Natural killer cell (primary cell): ENCODE measurements at regions of chr19 and their contacts with region 1.

Region 1: DNA sequence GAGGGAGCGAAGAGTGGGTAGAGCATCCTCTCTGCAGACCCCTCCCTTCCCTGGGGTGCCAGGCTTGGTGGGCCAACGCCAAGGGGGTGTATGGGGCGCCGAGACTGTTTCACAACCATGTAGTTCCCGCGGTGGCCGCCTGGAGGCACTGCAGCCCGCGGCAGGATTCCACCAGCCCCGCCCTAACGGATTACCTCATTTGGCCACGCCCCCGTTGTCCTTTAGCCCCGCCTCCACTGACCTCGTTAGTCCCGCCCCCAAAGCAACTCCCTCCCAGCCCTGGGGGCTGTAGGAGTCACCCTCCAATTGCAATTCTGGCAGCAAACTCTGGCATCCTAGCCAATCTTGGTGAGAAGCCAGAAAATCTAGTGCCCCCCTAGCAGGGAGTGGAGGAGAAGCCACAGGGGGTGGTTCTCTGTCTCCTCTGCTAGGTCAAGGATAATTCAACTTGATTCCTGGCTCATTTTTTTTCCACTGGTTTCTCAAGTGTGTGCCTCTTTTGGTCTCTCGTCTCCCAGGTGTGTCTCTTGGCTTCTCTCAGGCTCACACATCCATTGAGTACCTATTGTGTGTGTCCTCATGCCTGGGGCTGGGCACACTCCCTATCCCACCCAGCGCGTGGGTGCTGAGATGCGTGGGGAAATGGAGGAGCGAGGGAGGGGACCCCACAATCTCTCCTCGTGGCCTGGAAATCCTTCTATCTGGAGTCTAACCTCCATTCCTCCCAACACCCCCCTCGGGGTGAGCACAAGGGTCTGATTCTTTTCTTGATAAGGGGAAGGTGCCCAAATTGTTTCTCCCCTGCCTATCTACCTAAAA is 2.0 kb downstream of the OLFM2 start:
- DNase-seq: peak; percentile 84 to 90
- ATAC-seq: peak; percentile 92 to 95 (median 92)
- H3K4me3 ChIP-seq: no peak overlapping the region
- H3K4me3 Mint-ChIP-seq: no peak overlapping the region
- H3K27ac ChIP-seq: no peak overlapping the region
- H3K27ac Mint-ChIP-seq: peak overlapping the region in 1 of 2 donors; percentile 40
- H3K4me1 ChIP-seq: peaks cover 24% of the 10 kb centered on the region
- H3K4me1 Mint-ChIP-seq: peaks cover 22 to 33% of the 10 kb centered on the region in 2 donors
- H3K27me3 ChIP-seq: peaks cover 30% of the 10 kb centered on the region
- H3K27me3 Mint-ChIP-seq: peaks cover 37 to 48% of the 10 kb centered on the region in 2 donors
- CTCF ChIP-seq: peak; percentile 91

Region 2: DNA sequence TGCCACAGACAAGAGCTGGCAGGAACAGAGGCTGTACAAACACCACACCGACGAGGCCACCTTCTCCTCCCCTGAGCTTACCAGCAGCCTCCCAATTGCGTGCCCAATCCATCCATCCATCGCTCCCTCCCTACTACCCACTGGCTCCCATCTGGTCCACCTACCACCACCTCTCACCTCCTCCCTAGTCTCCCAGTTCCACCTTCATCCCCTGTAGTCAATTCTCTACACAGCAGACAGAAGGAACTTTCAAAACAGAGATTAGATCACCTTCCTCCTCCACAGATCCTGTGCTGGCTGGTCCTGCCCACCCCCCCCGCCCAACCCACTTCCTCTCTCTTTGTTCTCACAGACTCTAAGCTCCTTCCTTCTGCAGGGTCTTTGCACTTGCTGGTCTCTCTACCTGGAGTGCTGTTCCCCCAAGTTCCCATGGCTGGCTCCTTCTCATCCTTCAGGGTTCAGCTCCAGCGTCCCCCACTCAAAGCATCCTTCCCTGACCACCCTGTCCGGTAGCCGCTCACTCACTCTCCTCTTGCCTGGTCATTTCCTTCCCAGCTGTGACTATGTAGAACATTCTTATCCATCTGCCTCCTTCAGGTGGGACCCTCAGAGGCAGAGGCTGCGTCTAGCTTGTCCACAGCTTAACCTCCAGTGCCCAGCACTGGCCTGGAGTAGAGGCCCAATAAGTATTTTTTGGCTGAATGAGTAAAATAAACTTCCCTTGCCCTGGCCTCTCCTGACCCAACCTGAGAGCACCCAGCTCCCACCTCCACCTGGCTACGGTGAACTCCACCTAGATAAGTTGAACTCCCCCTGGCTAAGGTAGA is 76.2 kb before region 1 on chr19:
- intact Hi-C with region 1: no loop called
- DNase-seq: peak in 1 of 2 donors; percentile 76
- ATAC-seq: peak; percentile 43 to 73 (median 55)
- H3K4me3 ChIP-seq: no peak overlapping the region
- H3K4me3 Mint-ChIP-seq: peak overlapping the region; percentile 88
- H3K27ac ChIP-seq: peak overlapping the region; percentile 71
- H3K27ac Mint-ChIP-seq: peak overlapping the region; percentile 90 to 92
- H3K4me1 ChIP-seq: peaks cover 35% of the 10 kb centered on the region
- H3K4me1 Mint-ChIP-seq: peaks cover 34 to 52% of the 10 kb centered on the region in 2 donors
- H3K27me3 ChIP-seq: no peaks in the 10 kb centered on the region
- H3K27me3 Mint-ChIP-seq: no peaks in the 10 kb centered on the region
- CTCF ChIP-seq: no peak

Region 3: DNA sequence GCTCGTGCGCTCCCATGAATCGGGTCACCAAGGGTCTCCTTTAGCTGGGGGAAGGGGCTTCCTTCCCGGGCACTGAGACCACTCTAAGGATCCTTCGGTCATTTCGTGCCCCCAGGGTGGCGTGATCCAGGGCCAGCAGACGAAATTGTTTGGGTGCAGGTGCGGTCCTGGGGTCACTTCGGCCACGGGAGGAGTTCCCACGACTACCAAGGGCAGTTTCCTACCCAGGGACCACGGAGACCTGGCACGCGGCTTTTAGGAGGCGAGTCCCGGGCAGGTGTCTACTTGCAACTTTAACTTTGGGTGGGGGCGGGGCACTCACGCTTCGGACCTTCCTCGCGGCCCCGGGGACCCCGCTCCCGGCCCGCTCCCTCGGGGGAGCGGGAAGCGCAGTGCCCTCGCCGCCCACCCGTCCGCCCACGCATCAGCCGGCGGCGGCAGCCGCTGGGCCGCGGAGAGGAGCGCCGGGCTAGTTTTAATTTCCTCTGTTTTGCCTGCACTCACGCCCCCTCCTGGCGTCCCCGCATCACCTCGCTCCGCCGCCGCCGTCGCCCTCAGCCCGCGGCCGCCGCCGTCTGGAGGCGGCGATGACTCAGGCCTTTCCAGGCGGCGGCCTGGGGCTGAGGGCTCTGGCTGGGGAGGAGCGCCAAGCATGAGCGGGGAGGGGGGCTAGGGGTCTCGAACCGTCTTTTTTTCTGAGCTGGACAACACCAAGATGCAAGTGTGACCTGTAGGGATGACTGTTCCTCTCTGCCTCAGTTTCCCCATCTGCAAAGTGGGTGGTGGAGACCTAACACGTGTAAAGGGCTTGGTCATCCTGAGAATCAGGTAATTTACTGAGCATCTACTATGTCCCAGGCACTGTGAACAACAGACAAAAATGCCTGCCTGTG is 19.8 kb before region 1 on chr19:
- intact Hi-C with region 1: no loop called
- DNase-seq: peak; percentile 76 to 89
- ATAC-seq: peak; percentile 86 to 93 (median 92)
- H3K4me3 ChIP-seq: peak overlapping the region; percentile 19
- H3K4me3 Mint-ChIP-seq: peak overlapping the region; percentile 47
- H3K27ac ChIP-seq: no peak overlapping the region
- H3K27ac Mint-ChIP-seq: no peak overlapping the region
- H3K4me1 ChIP-seq: peaks cover 17% of the 10 kb centered on the region
- H3K4me1 Mint-ChIP-seq: peaks cover 0 to 5% of the 10 kb centered on the region in 2 donors
- H3K27me3 ChIP-seq: peaks cover 21% of the 10 kb centered on the region
- H3K27me3 Mint-ChIP-seq: peaks cover 25 to 27% of the 10 kb centered on the region in 2 donors
- CTCF ChIP-seq: peak; percentile 45

Region 4: DNA sequence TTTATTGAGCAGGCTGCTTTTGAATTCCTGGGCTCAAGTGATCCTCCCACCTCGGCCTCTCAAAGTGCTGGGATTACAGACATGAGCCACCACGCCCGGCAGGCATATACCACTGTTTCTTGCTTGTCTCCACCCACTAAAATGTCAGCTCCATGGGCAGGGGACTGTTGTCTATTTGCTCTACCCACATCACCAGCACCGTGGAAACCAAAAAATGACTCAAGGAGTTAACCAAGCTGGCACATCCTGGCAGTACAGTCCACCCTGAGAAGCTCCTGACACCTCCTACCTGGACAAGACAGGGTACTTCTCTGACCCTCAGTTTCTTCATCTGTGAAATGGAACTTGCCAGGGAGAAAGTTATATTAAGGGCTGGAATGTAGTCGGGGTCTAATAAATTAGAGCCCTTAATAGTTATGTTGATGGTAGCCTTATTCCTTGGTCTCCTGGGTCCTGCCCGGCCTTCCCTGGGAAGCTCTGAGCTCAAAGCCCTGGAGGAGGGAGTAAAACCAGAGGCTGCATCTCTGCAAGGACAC is 92.9 kb after region 1 on chr19:
- intact Hi-C with region 1: loop called (anchors 1 kb)
- DNase-seq: no peak
- ATAC-seq: no peak
- H3K4me3 ChIP-seq: no peak overlapping the region
- H3K4me3 Mint-ChIP-seq: no peak overlapping the region
- H3K27ac ChIP-seq: no peak overlapping the region
- H3K27ac Mint-ChIP-seq: no peak overlapping the region
- H3K4me1 ChIP-seq: peaks cover 6% of the 10 kb centered on the region
- H3K4me1 Mint-ChIP-seq: no peaks in the 10 kb centered on the region
- H3K27me3 ChIP-seq: no peaks in the 10 kb centered on the region
- H3K27me3 Mint-ChIP-seq: peaks cover 9 to 10% of the 10 kb centered on the region in 2 donors
- CTCF ChIP-seq: no peak

Region 5: GRCh38 chr19:10112895-10113591 is 178.7 kb after region 1 on chr19:
- intact Hi-C with region 1: loop called (anchors 1 kb)
- DNase-seq: peak; percentile 68 to 85
- ATAC-seq: peak; percentile 61 to 77 (median 62)
- H3K4me3 ChIP-seq: no peak overlapping the region
- H3K4me3 Mint-ChIP-seq: peak overlapping the region; percentile 88
- H3K27ac ChIP-seq: peak overlapping the region; percentile 93
- H3K27ac Mint-ChIP-seq: peak overlapping the region; percentile 95 to 98
- H3K4me1 ChIP-seq: peaks cover 91% of the 10 kb centered on the region
- H3K4me1 Mint-ChIP-seq: peaks cover 43 to 74% of the 10 kb centered on the region in 2 donors
- H3K27me3 ChIP-seq: no peaks in the 10 kb centered on the region
- H3K27me3 Mint-ChIP-seq: no peaks in the 10 kb centered on the region
- CTCF ChIP-seq: peak; percentile 71

Region 6: GRCh38 chr19:10230861-10231611 is 296.7 kb after region 1 on chr19 and contains the start of gene S1PR2:
- intact Hi-C with region 1: loop called (anchors 5 kb)
- DNase-seq: peak; percentile 68 to 88
- ATAC-seq: peak; percentile 49 to 66 (median 55)
- H3K4me3 ChIP-seq: peak within 1 kb of the TSS; percentile 88
- H3K4me3 Mint-ChIP-seq: peak within 1 kb of the TSS; percentile 92
- H3K27ac ChIP-seq: peak within 1 kb of the TSS; percentile 86
- H3K27ac Mint-ChIP-seq: peak within 1 kb of the TSS; percentile 86 to 88
- H3K4me1 ChIP-seq: peaks cover 45% of the 10 kb centered on the region
- H3K4me1 Mint-ChIP-seq: peaks cover 9 to 18% of the 10 kb centered on the region in 2 donors
- H3K27me3 ChIP-seq: no peaks in the 10 kb centered on the region
- H3K27me3 Mint-ChIP-seq: no peaks in the 10 kb centered on the region
- CTCF ChIP-seq: no peak
- total RNA-seq, gene S1PR2: 6.8 to 12.6 (median 9.5) TPM

Region 7: DNA sequence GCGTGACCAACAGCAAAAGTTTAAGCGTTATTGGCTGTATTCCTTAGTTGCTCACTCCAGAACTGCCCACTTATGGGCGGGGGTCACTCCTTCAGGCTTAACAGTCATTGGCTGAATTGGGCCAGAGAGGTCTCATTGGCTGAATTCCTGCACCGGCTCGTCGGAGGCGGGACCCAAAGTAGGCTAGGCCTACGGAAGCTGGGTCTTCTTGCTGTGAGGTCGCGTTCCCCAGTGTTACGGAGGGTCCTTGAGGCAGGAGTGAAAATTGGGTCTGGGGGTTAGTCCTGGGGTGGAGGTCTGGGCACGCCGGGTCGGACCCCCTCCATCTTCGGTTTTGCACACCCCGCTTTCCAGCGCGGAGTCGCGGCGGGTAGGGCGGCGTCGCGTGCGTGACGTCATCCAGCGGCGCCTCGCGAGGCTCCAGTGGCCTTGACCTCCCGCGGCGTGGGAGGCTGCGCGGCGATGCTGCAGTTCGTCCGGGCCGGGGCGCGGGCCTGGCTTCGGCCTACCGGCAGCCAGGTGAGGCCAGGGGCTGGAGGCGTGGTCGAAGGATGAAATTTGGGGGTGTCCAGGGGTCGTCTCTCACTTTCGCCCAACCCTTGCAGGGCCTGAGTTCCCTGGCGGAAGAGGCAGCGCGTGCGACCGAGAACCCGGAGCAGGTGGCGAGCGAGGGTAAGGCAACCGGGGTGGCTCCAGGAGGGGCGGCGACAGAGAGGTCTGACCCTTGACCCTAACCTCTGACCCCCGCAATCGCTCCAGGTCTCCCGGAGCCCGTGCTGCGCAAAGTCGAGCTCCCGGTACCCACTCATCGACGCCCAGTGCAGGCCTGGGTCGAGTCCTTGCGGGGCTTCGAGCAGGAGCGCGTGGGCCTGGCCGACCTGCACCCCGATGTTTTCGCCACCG is 317.7 kb after region 1 on chr19 and contains the start of gene MRPL4:
- intact Hi-C with region 1: loop called (anchors 1 kb)
- DNase-seq: peak; percentile 93 to 98
- ATAC-seq: peak; percentile 95 to 99 (median 95)
- H3K4me3 ChIP-seq: peak within 1 kb of the TSS; percentile 96
- H3K4me3 Mint-ChIP-seq: peak within 1 kb of the TSS; percentile 95
- H3K27ac ChIP-seq: peak within 1 kb of the TSS; percentile 75
- H3K27ac Mint-ChIP-seq: peak within 1 kb of the TSS; percentile 90 to 93
- H3K4me1 ChIP-seq: peaks cover 20% of the 10 kb centered on the region
- H3K4me1 Mint-ChIP-seq: peaks cover 0 to 33% of the 10 kb centered on the region in 2 donors
- H3K27me3 ChIP-seq: no peaks in the 10 kb centered on the region
- H3K27me3 Mint-ChIP-seq: no peaks in the 10 kb centered on the region
- CTCF ChIP-seq: no peak
- total RNA-seq, gene MRPL4: 34.5 to 41.6 (median 40.2) TPM

Region 8: GRCh38 chr19:10388957-10389356 is 454.6 kb after region 1 on chr19:
- intact Hi-C with region 1: loop called (anchors 2 kb)
- DNase-seq: peak; percentile 82 to 91
- ATAC-seq: peak; percentile 55 to 68 (median 61)
- H3K4me3 ChIP-seq: no peak overlapping the region
- H3K4me3 Mint-ChIP-seq: no peak overlapping the region
- H3K27ac ChIP-seq: no peak overlapping the region
- H3K27ac Mint-ChIP-seq: peak overlapping the region in 1 of 2 donors; percentile 54
- H3K4me1 ChIP-seq: peaks cover 6% of the 10 kb centered on the region
- H3K4me1 Mint-ChIP-seq: peaks cover 4 to 10% of the 10 kb centered on the region in 2 donors
- H3K27me3 ChIP-seq: no peaks in the 10 kb centered on the region
- H3K27me3 Mint-ChIP-seq: no peaks in the 10 kb centered on the region
- CTCF ChIP-seq: peak; percentile 93